ENCODE measurements at regions of chr20 and their contacts with region 1.

Region 1: DNA sequence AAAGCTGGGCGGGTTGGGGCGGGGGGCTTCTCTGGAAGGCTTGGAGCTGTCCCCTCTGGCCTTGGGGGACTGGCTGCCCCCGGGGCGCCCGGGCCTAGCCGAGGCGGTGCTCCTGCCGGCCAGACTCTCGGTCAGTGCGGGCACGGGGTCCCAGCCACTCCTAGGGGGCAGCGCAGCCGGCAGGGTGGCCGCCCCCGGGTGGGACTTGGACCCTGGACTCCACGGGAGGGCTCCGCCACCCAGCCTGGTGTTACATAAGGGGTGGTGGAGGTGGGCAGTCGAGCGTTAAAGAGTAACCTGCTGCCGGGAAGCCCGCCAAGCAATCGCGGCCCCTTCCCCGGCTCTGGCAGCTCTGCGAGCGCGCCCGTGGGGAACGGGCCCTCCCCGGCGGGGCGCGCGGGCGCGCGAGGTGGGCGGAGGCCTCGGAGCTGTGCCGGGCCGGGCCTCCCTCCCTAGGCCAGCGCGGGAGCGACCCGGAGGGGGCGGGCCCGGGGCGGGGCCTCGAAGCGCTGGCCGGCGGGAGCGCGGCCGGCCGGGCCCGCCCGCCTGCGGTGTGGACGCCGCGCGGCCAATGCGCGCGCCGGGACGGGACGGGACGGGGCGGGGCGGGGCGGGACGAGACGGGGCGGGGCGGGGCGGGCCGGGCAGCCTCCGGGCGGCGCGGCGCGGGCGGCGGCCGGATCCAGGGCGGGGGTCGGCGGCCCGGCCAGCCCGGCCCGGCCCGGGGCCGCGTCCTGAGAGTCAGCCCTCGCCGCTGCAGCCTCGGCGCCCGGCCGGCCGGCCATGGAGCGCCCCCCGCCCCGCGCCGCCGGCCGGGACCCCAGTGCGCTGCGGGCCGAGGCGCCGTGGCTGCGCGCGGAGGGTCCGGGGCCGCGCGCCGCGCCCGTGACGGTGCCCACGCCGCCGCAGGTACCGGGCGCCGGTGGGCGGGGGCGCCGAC is at the start of gene SLC2A4RG:
- DNase-seq: peak; percentile 88
- ATAC-seq: peak; percentile 41
- H3K4me3 Mint-ChIP-seq: peak within 1 kb of the TSS; percentile 70
- H3K27ac Mint-ChIP-seq: peak within 1 kb of the TSS; percentile 30
- H3K4me1 Mint-ChIP-seq: peaks cover 11% of the 10 kb centered on the region
- H3K27me3 Mint-ChIP-seq: no peaks in the 10 kb centered on the region
- total RNA-seq, gene SLC2A4RG: 128 to 134 TPM

Region 2: DNA sequence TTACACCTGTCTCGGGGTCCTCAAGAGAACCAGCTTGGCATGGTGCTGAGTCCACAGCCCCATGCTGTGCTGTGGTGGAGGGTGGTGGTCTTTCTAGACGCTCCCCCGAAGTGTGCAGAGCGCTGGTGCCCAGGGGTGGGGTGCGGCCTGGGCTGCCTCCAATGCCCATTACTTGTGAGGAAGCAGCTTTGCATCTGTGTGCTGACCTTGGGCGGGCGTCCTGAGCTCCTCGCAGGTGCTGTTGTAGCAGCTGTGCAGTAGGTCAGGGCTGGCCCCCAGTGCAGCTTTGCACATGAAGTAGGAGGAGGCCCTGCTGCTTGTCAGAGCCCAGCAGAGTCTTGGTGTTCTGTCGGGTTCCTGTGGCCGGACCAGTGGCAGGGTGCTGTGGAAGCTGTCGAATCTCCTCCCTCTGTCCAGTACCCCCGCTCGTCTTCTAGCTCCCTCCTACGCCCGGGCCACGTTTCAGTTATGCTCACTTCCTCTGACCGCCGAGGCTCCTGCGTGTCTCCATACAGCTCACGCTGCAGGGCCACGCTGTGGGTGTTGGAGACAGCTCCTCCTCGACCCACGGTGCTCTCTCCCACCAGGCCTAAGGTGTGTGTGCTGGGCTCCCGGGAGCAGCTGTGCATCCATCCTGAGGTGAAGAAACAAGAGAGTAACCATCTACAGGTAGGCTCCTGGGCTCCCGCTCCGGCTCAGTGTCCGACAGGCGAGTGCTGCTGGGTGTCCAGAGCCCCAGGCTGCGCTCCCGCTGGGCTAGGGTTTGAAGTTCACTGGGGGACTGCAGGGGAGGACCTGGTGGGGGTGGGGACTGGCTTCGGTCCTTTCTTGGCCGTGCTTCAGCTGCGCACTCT is 77.2 kb before region 1 on chr20:
- POLR2A ChIA-PET with region 1: no interaction called
- DNase-seq: no peak
- ATAC-seq: no peak
- H3K4me3 Mint-ChIP-seq: no peak overlapping the region
- H3K27ac Mint-ChIP-seq: no peak overlapping the region
- H3K4me1 Mint-ChIP-seq: peaks cover 8% of the 10 kb centered on the region
- H3K27me3 Mint-ChIP-seq: no peaks in the 10 kb centered on the region

Region 3: GRCh38 chr20:63750807-63751470 is 11.5 kb after region 1 on chr20:
- POLR2A ChIA-PET with region 1: interaction called, 31 read pairs
- DNase-seq: peak; percentile 76
- ATAC-seq: peak; percentile 82
- H3K4me3 Mint-ChIP-seq: peak overlapping the region; percentile 71
- H3K27ac Mint-ChIP-seq: peak overlapping the region; percentile 94
- H3K4me1 Mint-ChIP-seq: peaks cover 15% of the 10 kb centered on the region
- H3K27me3 Mint-ChIP-seq: no peaks in the 10 kb centered on the region

Region 4: DNA sequence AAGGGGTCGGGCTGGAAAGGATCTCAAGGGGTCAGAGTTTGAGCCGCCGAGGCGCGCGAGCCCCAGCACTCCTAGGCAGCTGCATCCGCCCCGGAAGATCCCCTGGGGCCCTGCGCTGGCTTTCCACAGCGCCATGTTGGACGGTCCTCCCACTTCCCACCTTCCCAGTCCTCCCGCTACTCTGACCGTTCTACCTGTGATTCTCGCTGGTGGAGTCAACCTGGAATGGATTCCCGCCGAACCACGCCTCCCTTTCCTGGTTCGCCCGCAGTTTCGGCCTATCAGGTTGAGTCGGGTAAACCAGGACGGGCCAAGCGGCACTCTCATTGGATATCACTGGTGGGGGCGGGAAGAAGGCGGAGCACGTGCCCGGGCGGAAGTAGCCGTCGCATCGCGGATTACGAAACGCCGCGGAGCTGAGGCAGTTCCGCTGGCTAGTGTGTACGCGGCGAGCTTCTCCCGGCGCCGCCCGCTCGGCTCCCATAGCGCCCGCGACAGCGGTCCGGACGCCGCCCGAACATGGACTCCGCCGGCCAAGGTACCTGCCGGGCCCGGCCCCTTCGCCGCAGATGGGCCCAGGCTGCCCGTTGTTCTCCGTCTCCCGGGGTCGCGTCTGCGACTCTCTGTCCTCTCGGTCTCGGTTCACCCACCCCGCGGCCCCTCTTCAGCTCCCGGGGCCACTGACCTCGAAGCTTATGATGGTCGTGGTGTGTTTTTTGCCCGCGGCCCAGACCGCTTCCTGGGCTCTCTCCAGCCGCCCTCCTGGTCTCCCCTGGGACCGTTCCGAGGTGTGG is 125.6 kb after region 1 on chr20 and contains the start of gene TPD52L2:
- POLR2A ChIA-PET with region 1: interaction called, 13 read pairs
- DNase-seq: peak; percentile 95
- ATAC-seq: peak; percentile 83
- H3K4me3 Mint-ChIP-seq: peak within 1 kb of the TSS; percentile 100
- H3K27ac Mint-ChIP-seq: peak within 1 kb of the TSS; percentile 98
- H3K4me1 Mint-ChIP-seq: peaks cover 15% of the 10 kb centered on the region
- H3K27me3 Mint-ChIP-seq: no peaks in the 10 kb centered on the region
- total RNA-seq, gene TPD52L2: 37.9 to 39.5 TPM